ENCODE measurements at regions of chr3 and their contacts with region 1.

Region 1: DNA sequence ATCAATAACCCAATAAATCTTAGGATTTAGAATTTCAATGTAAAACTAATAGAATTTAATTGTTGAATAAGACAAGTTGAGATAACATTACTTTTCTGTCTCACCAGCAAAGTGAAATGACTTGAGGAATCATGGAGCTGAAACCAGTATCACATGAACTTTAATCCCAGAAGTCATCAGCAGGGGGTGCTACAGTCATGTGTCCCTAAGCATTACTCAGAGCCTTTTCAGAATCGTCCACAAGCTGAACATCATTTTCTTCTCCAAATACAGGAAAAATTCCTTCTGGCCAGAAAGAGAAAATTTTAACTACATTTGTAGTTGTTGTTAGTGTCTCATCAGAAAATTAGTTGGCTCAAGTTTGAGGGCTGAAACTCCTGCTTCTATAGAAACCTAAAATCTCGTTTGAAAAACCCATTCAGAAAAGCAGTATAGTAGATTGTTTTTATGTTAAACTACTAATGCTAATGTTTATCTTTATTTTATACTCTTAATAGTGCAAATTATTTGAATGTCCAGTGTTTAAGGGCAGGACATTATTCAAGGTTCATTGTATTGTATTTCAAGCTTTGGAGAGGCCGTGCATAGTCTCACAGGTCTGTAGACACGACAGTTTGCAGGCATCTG is 384.1 kb downstream of the PLOD2 start:
- DNase-seq: peak; percentile 80
- H3K4me3 ChIP-seq: no peak overlapping the region
- H3K27ac ChIP-seq: no peak overlapping the region
- H3K4me1 ChIP-seq: no peaks in the 10 kb centered on the region
- H3K27me3 ChIP-seq: peaks cover 0 to 3% of the 10 kb centered on the region in 2 experiments
- CTCF ChIP-seq: peak; percentile 53 to 62
- POLR2A ChIP-seq: no peak

Region 2: GRCh38 chr3:145118303-145118702 is 658.6 kb before region 1 on chr3:
- CTCF ChIA-PET with region 1: no interaction called
- POLR2A ChIA-PET with region 1: no interaction called
- dilution Hi-C with region 1: no loop called
- intact Hi-C with region 1: no loop called
- DNase-seq: no peak
- H3K4me3 ChIP-seq: no peak overlapping the region
- H3K27ac ChIP-seq: no peak overlapping the region
- H3K4me1 ChIP-seq: no peaks in the 10 kb centered on the region
- H3K27me3 ChIP-seq: no peaks in the 10 kb centered on the region
- CTCF ChIP-seq: no peak
- POLR2A ChIP-seq: no peak

Region 3: GRCh38 chr3:145716519-145716918 is 60.4 kb before region 1 on chr3:
- CTCF ChIA-PET with region 1: no interaction called
- POLR2A ChIA-PET with region 1: no interaction called
- dilution Hi-C with region 1: no loop called
- intact Hi-C with region 1: no loop called
- DNase-seq: no peak
- H3K4me3 ChIP-seq: no peak overlapping the region
- H3K27ac ChIP-seq: no peak overlapping the region
- H3K4me1 ChIP-seq: no peaks in the 10 kb centered on the region
- H3K27me3 ChIP-seq: no peaks in the 10 kb centered on the region
- CTCF ChIP-seq: no peak
- POLR2A ChIP-seq: no peak

Region 4: DNA sequence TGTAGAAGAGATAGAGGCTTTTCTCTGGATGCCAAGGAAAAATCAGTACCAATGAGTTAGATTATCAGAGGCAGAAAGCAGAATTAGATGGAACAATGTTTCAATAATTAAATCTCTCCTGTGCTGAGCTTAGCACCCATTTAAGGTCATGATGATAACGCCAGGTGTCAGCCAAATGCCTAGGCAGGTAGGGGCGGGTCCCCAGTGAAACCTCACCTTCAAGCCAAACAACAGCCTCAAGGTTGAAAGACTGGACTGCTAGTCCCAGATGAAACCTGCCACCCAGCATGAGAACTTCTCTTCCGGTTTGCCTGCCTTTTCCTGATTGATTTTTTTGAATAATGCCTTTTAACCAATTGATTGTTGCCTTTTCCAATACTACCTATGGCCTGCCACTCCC is 21.1 kb after region 1 on chr3:
- CTCF ChIA-PET with region 1: interaction called, 15 read pairs
- POLR2A ChIA-PET with region 1: no interaction called
- dilution Hi-C with region 1: no loop called
- intact Hi-C with region 1: no loop called
- DNase-seq: no peak
- H3K4me3 ChIP-seq: no peak overlapping the region
- H3K27ac ChIP-seq: no peak overlapping the region
- H3K4me1 ChIP-seq: no peaks in the 10 kb centered on the region
- H3K27me3 ChIP-seq: no peaks in the 10 kb centered on the region
- CTCF ChIP-seq: no peak
- POLR2A ChIP-seq: no peak

Region 5: DNA sequence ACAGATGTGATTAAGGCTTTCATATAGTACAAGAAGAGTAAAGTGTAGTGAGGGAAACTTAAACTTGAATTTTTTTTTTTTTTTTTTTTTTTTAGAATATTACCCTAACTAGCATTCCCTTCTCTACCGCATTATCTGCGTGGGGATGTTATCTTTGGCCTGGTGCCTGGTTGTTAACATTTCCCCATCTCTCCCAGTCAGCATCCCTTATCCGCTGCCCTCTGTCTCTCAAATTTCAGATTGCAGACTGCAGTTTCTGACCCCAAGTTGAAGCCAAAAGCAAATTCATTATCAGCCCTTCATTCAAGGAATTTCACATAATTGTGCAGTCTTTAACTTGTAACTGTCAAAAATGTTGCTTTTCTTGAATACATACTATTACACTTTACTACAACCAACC is 31.1 kb after region 1 on chr3:
- CTCF ChIA-PET with region 1: interaction called, 11 read pairs
- POLR2A ChIA-PET with region 1: no interaction called
- dilution Hi-C with region 1: no loop called
- intact Hi-C with region 1: no loop called
- DNase-seq: peak; percentile 48
- H3K4me3 ChIP-seq: no peak overlapping the region
- H3K27ac ChIP-seq: no peak overlapping the region
- H3K4me1 ChIP-seq: no peaks in the 10 kb centered on the region
- H3K27me3 ChIP-seq: no peaks in the 10 kb centered on the region
- CTCF ChIP-seq: peak; percentile 29
- POLR2A ChIP-seq: no peak

Region 6: GRCh38 chr3:146044046-146044445 is 267.2 kb after region 1 on chr3:
- CTCF ChIA-PET with region 1: no interaction called
- POLR2A ChIA-PET with region 1: no interaction called
- dilution Hi-C with region 1: no loop called
- intact Hi-C with region 1: no loop called
- DNase-seq: no peak
- H3K4me3 ChIP-seq: no peak overlapping the region
- H3K27ac ChIP-seq: no peak overlapping the region
- H3K4me1 ChIP-seq: peaks cover 5% of the 10 kb centered on the region
- H3K27me3 ChIP-seq: no peaks in the 10 kb centered on the region
- CTCF ChIP-seq: no peak
- POLR2A ChIP-seq: no peak